ENCODE measurements at regions of chr1 and their contacts with region 1.

Region 1: GRCh38 chr1:234309598-234310459 is 63.4 kb upstream of the COA6 start:
- DNase-seq: peak; percentile 87
- ATAC-seq: peak; percentile 77
- H3K4me3 Mint-ChIP-seq: peak overlapping the region; percentile 26
- H3K27ac Mint-ChIP-seq: peak overlapping the region; percentile 59
- H3K4me1 Mint-ChIP-seq: peaks cover 43% of the 10 kb centered on the region
- H3K27me3 Mint-ChIP-seq: no peaks in the 10 kb centered on the region

Region 2: GRCh38 chr1:234114648-234115307 is 195.1 kb before region 1 on chr1:
- CTCF ChIA-PET with region 1: interaction called, 24 read pairs
- POLR2A ChIA-PET with region 1: no interaction called
- intact Hi-C with region 1: loop called in 1 of 2 experiments (anchors 1 kb)
- DNase-seq: peak; percentile 42
- ATAC-seq: peak; percentile 55
- H3K4me3 Mint-ChIP-seq: peak overlapping the region; percentile 30
- H3K27ac Mint-ChIP-seq: no peak overlapping the region
- H3K4me1 Mint-ChIP-seq: peaks cover 5% of the 10 kb centered on the region
- H3K27me3 Mint-ChIP-seq: peaks cover 12% of the 10 kb centered on the region

Region 3: GRCh38 chr1:234154320-234155251 is 155.2 kb before region 1 on chr1:
- CTCF ChIA-PET with region 1: interaction called, 7 read pairs
- POLR2A ChIA-PET with region 1: no interaction called
- intact Hi-C with region 1: loop called (anchors 1 to 5 kb)
- DNase-seq: peak; percentile 20
- ATAC-seq: peak; percentile 61
- H3K4me3 Mint-ChIP-seq: no peak overlapping the region
- H3K27ac Mint-ChIP-seq: no peak overlapping the region
- H3K4me1 Mint-ChIP-seq: peaks cover 4% of the 10 kb centered on the region
- H3K27me3 Mint-ChIP-seq: peaks cover 4% of the 10 kb centered on the region

Region 4: GRCh38 chr1:234230414-234230862 is 79.4 kb before region 1 on chr1:
- CTCF ChIA-PET with region 1: interaction called, 13 read pairs
- POLR2A ChIA-PET with region 1: no interaction called
- intact Hi-C with region 1: loop called in 1 of 2 experiments (anchors 5 kb)
- DNase-seq: peak; percentile 41
- ATAC-seq: peak; percentile 47
- H3K4me3 Mint-ChIP-seq: no peak overlapping the region
- H3K27ac Mint-ChIP-seq: no peak overlapping the region
- H3K4me1 Mint-ChIP-seq: peaks cover 8% of the 10 kb centered on the region
- H3K27me3 Mint-ChIP-seq: peaks cover 6% of the 10 kb centered on the region

Region 5: GRCh38 chr1:234271243-234271606 is 38.6 kb before region 1 on chr1:
- CTCF ChIA-PET with region 1: interaction called, 11 read pairs
- POLR2A ChIA-PET with region 1: no interaction called
- intact Hi-C with region 1: loop called (anchors 1 kb)
- DNase-seq: no peak
- ATAC-seq: peak; percentile 93
- H3K4me3 Mint-ChIP-seq: no peak overlapping the region
- H3K27ac Mint-ChIP-seq: no peak overlapping the region
- H3K4me1 Mint-ChIP-seq: peaks cover 30% of the 10 kb centered on the region
- H3K27me3 Mint-ChIP-seq: peaks cover 19% of the 10 kb centered on the region

Region 6: GRCh38 chr1:234295068-234295467 is 14.8 kb before region 1 on chr1:
- CTCF ChIA-PET with region 1: interaction called, 13 read pairs
- POLR2A ChIA-PET with region 1: no interaction called
- intact Hi-C with region 1: no loop called
- DNase-seq: no peak
- ATAC-seq: no peak
- H3K4me3 Mint-ChIP-seq: no peak overlapping the region
- H3K27ac Mint-ChIP-seq: no peak overlapping the region
- H3K4me1 Mint-ChIP-seq: no peaks in the 10 kb centered on the region
- H3K27me3 Mint-ChIP-seq: peaks cover under 1% of the 10 kb centered on the region

Region 7: DNA sequence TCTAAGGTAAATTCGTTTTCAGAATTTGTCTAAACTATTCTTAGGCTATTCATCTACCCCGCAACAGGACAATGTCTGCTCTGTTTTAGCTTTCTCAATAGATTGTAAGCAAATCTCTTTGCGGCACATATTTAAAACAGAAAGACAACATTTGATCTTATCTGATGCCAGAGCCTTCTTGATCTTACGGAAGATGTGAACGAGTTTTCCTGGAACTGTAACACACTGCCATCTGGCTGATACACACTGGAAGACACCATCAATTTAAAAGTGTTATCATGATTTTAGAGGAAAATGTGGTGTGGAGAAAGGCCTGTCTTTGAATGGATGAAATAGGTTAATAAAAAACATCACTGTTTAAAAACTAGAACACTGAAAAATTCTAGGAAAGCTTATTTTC is 99.5 kb after region 1 on chr1:
- CTCF ChIA-PET with region 1: interaction called, 7 read pairs
- POLR2A ChIA-PET with region 1: no interaction called
- intact Hi-C with region 1: loop called (anchors 1 to 2 kb)
- DNase-seq: peak; percentile 21
- ATAC-seq: peak; percentile 53
- H3K4me3 Mint-ChIP-seq: peak overlapping the region; percentile 51
- H3K27ac Mint-ChIP-seq: peak overlapping the region; percentile 89
- H3K4me1 Mint-ChIP-seq: peaks cover 42% of the 10 kb centered on the region
- H3K27me3 Mint-ChIP-seq: no peaks in the 10 kb centered on the region